AG04449 (cell line): ENCODE measurements at regions of chr1 and their contacts with region 1.

Region 1: GRCh38 chr1:161792740-161793139 is 26.6 kb downstream of the ATF6 start:
- DNase-seq: peak; percentile 51
- H3K4me3 ChIP-seq: no peak overlapping the region
- CTCF ChIP-seq: peak; percentile 39

Region 2: DNA sequence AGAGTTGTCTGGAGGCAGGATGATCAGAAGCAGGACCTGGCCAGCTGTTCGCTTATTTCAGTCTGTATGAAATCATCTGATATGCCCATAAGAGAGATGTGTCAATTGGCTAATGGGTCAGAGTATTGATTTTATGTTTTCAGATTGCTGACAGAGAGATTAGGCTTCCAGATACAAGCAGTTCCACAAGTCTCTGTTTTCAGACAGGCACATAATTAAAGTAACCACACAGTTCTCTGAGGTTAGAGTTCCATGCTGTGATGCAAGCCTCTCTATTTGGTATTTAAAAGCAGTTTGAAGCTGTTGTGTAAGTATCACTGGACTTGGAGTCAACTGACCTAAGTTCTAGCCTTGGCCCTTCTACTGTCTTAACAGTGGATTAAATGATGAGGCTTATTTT is 23.5 kb after region 1 on chr1:
- CTCF ChIA-PET with region 1: interaction called, 15 read pairs
- POLR2A ChIA-PET with region 1: no interaction called
- DNase-seq: peak; percentile 37
- H3K4me3 ChIP-seq: no peak overlapping the region
- CTCF ChIP-seq: no peak

Region 3: DNA sequence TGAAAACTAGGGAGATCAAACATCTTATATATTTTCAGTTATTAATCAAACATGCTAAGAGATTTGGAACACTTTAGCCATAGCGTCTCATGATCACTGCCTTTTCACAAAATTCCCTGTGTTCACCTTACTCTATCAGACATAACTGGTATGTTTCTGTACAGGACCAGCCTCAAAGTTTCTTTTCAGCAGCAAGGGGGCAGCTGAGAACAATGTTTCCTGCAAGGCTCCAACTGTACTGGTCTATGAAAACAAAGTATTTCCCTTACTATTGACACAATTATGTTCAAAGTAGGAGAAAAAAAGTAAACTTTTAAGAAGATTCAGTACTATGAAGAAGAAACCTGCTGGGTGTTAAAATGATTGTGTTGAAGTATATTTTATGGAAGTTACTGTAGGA is 71.8 kb after region 1 on chr1:
- CTCF ChIA-PET with region 1: interaction called, 22 read pairs
- POLR2A ChIA-PET with region 1: no interaction called
- DNase-seq: no peak
- H3K4me3 ChIP-seq: no peak overlapping the region
- CTCF ChIP-seq: peak; percentile 54

Region 4: GRCh38 chr1:162023547-162024501 is 231.1 kb after region 1 on chr1 and contains the start of gene OLFML2B:
- CTCF ChIA-PET with region 1: interaction called, 797 read pairs
- POLR2A ChIA-PET with region 1: interaction called, 4 read pairs
- DNase-seq: peak; percentile 46
- H3K4me3 ChIP-seq: peak within 1 kb of the TSS; percentile 77
- CTCF ChIP-seq: peak; percentile 39

Region 5: GRCh38 chr1:162046921-162047320 is 254.2 kb after region 1 on chr1:
- CTCF ChIA-PET with region 1: interaction called, 56 read pairs
- POLR2A ChIA-PET with region 1: no interaction called
- DNase-seq: no peak
- H3K4me3 ChIP-seq: no peak overlapping the region
- CTCF ChIP-seq: no peak